ENCODE measurements at regions of chr6 and their contacts with region 1.

Region 1: GRCh38 chr6:3046295-3046694 is 22.0 kb upstream of the RIPK1 start:
- DNase-seq: no peak
- H3K4me3 ChIP-seq: no peak overlapping the region
- H3K27ac ChIP-seq: no peak overlapping the region
- H3K4me1 ChIP-seq: no peaks in the 10 kb centered on the region
- H3K27me3 ChIP-seq: no peaks in the 10 kb centered on the region
- CTCF ChIP-seq: no peak
- EP300 ChIP-seq: no peak
- POLR2A ChIP-seq: no peak

Region 2: GRCh38 chr6:3005874-3006273 is 40.4 kb before region 1 on chr6:
- intact Hi-C with region 1: loop called (anchors 2 kb)
- DNase-seq: no peak
- H3K4me3 ChIP-seq: no peak overlapping the region
- H3K27ac ChIP-seq: no peak overlapping the region
- H3K4me1 ChIP-seq: peaks cover 12 to 20% (median 14%) of the 10 kb centered on the region in 4 donors
- H3K27me3 ChIP-seq: no peaks in the 10 kb centered on the region
- CTCF ChIP-seq: no peak
- EP300 ChIP-seq: no peak
- POLR2A ChIP-seq: no peak

Measured in esophagus muscularis mucosa (tissue), 4 donors.